Right cardiac atrium (tissue), 5 donors: ENCODE measurements at regions of chr1 and their contacts with region 1.

Region 1: GRCh38 chr1:63698001-63698838 is 75.6 kb upstream of the ROR1 start:
- DNase-seq: peak; percentile 62 to 81 (median 79)
- ATAC-seq: peak; percentile 86 to 88
- H3K4me3 ChIP-seq: no peak overlapping the region
- H3K27ac ChIP-seq: peak overlapping the region; percentile 92
- H3K4me1 ChIP-seq: peaks cover 5% of the 10 kb centered on the region
- H3K27me3 ChIP-seq: no peaks in the 10 kb centered on the region

Region 2: DNA sequence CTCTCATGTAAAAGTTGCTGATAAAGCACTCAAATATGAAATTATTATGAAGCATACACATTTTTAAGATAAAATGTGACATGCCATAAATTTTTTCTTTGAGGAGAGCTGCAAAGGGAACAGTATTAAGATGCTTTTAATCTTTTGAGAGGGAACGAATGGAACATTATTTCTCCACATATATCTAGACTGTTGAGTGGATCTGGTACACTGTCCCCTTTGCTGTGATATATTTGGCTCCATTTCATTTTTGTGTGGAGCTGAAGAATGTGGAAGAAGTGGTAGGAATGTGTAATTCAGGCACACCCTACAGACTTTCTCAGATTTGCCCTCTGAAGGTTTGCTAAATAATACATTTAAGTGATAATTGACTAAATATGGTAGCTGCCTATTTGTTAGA is 73.3 kb before region 1 on chr1:
- intact Hi-C with region 1: no loop called
- DNase-seq: no peak
- ATAC-seq: peak in 1 of 2 donors; percentile 56
- H3K4me3 ChIP-seq: no peak overlapping the region
- H3K27ac ChIP-seq: no peak overlapping the region
- H3K4me1 ChIP-seq: peaks cover 1% of the 10 kb centered on the region
- H3K27me3 ChIP-seq: no peaks in the 10 kb centered on the region

Region 3: GRCh38 chr1:63859480-63860270 is 161.5 kb after region 1 on chr1:
- intact Hi-C with region 1: loop called in 1 of 4 experiments (anchors 5 kb)
- DNase-seq: no peak
- ATAC-seq: no peak
- H3K4me3 ChIP-seq: no peak overlapping the region
- H3K27ac ChIP-seq: no peak overlapping the region
- H3K4me1 ChIP-seq: no peaks in the 10 kb centered on the region
- H3K27me3 ChIP-seq: no peaks in the 10 kb centered on the region

Region 4: GRCh38 chr1:63960326-63960725 is 262.1 kb after region 1 on chr1:
- intact Hi-C with region 1: no loop called
- DNase-seq: no peak
- ATAC-seq: no peak
- H3K4me3 ChIP-seq: no peak overlapping the region
- H3K27ac ChIP-seq: no peak overlapping the region
- H3K4me1 ChIP-seq: peaks cover 1% of the 10 kb centered on the region
- H3K27me3 ChIP-seq: no peaks in the 10 kb centered on the region